ENCODE measurements at regions of chr1 and their contacts with region 1.

Region 1: GRCh38 chr1:66374561-66375111 is 159.3 kb upstream of the SGIP1 start:
- DNase-seq: peak in 3 of 9 experiments; percentile 22 to 77 (median 61)
- ATAC-seq: peak; percentile 69
- H3K4me3 ChIP-seq: no peak overlapping the region
- H3K4me3 Mint-ChIP-seq: peak overlapping the region; percentile 63
- H3K27ac ChIP-seq: peak overlapping the region; percentile 19 to 75
- H3K27ac Mint-ChIP-seq: peak overlapping the region; percentile 94
- H3K4me1 ChIP-seq: peaks cover 48% of the 10 kb centered on the region
- H3K4me1 Mint-ChIP-seq: peaks cover 64% of the 10 kb centered on the region
- H3K27me3 ChIP-seq: peaks cover 0 to under 1% of the 10 kb centered on the region in 2 experiments
- H3K27me3 Mint-ChIP-seq: no peaks in the 10 kb centered on the region
- CTCF ChIP-seq: no peak

Region 2: DNA sequence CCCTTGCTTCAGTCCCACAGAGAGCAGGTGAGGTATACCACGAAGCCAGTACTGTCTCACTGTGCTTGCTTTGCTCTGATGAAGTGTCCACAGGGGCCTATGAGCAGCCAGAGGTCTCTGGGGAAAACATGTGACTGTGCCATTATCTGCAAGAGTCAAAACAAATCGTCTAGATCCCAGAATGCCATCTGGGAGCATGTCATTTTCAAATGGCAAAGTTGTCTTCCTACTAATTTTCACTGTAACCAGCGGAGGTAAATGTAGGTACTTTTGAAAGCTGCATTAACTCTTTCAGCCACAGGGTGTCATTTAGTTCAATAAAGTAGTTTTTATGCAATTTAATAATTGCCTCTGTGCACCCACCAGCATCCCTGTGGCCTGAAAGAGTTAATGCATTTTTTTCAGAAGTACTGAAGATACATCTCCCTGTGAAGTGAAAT is 14.3 kb before region 1 on chr1:
- CTCF ChIA-PET with region 1: interaction called, 3 read pairs
- POLR2A ChIA-PET with region 1: interaction called, 4 read pairs
- intact Hi-C with region 1: loop called (anchors 2 kb)
- DNase-seq: no peak
- ATAC-seq: no peak
- H3K4me3 ChIP-seq: no peak overlapping the region
- H3K4me3 Mint-ChIP-seq: no peak overlapping the region
- H3K27ac ChIP-seq: no peak overlapping the region
- H3K27ac Mint-ChIP-seq: no peak overlapping the region
- H3K4me1 ChIP-seq: peaks cover 37% of the 10 kb centered on the region
- H3K4me1 Mint-ChIP-seq: peaks cover 63% of the 10 kb centered on the region
- H3K27me3 ChIP-seq: no peaks in the 10 kb centered on the region
- H3K27me3 Mint-ChIP-seq: no peaks in the 10 kb centered on the region
- CTCF ChIP-seq: peak; percentile 21

Region 3: GRCh38 chr1:66395202-66396061 is 20.8 kb after region 1 on chr1:
- CTCF ChIA-PET with region 1: no interaction called
- POLR2A ChIA-PET with region 1: no interaction called
- intact Hi-C with region 1: loop called in 1 of 2 experiments (anchors 1 kb)
- DNase-seq: peak in 1 of 9 experiments; percentile 30
- ATAC-seq: no peak
- H3K4me3 ChIP-seq: no peak overlapping the region
- H3K4me3 Mint-ChIP-seq: no peak overlapping the region
- H3K27ac ChIP-seq: no peak overlapping the region
- H3K27ac Mint-ChIP-seq: no peak overlapping the region
- H3K4me1 ChIP-seq: no peaks in the 10 kb centered on the region
- H3K4me1 Mint-ChIP-seq: no peaks in the 10 kb centered on the region
- H3K27me3 ChIP-seq: no peaks in the 10 kb centered on the region
- H3K27me3 Mint-ChIP-seq: no peaks in the 10 kb centered on the region
- CTCF ChIP-seq: no peak